Activated naive CD4-positive, alpha-beta T cell treated with anti-CD3 and anti-CD28 coated beads for 36 hours (primary cell): ENCODE measurements at regions of chr14 and their contacts with region 1.

Region 1: DNA sequence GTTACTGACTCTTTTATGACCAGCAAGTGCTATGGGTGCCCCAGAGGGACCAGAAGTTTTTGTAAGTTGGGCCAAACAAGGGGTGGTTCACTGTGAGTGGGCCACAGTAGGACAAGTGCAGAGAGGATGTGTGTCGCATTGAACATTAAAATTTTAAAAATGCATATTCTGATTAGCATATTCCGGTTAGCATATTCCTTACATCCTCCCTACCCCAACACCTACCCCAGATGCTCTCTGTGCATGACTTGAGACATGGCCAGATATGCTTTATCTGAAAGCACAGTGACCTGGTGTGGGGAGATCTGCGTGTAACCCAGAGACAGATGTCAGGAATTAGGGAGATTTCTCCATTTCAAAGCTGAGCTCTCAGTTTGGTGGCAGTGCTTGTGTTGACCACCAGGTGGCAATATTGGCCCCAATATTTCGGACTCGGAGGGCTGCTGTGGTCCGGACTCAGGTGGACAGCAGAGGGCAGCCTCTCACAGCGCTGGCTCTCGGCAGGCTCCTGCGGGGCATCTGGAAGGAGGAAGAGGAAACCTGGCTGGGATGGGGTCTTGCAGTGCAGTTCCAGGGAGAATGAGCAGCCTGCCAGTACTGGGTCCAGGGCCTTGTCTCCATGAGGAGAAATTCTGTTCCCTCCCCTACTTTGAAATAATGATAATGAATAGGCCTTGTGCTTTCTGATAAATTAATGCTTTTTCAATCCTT is 1.6 kb upstream of the CEBPE start:
- DNase-seq: peak; percentile 94
- H3K4me3 Mint-ChIP-seq: no peak overlapping the region
- H3K27ac Mint-ChIP-seq: peak overlapping the region; percentile 87
- H3K4me1 Mint-ChIP-seq: peaks cover 41% of the 10 kb centered on the region
- H3K27me3 Mint-ChIP-seq: no peaks in the 10 kb centered on the region

Region 2: DNA sequence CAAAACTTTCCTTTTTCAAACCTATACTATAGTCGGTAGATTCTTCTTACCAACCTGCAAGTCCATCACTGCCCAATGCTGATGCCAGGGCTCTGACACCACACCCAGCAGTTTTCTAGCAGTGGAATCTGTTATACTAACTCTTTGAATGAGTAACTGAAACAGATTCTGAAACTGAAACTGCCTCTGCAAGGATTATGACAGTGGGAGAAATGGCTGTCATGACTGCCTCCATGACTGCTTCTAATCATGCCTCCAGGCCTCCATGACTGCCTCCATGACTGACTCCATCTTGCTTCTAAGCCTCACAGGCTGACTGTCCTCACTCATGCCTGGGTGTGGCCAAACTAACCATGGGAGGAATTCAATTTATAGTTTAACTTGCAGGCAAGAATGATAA is 383.6 kb before region 1 on chr14:
- CTCF ChIA-PET with region 1: no interaction called
- intact Hi-C with region 1: no loop called
- DNase-seq: peak; percentile 67
- H3K4me3 Mint-ChIP-seq: no peak overlapping the region
- H3K27ac Mint-ChIP-seq: no peak overlapping the region
- H3K4me1 Mint-ChIP-seq: peaks cover 7% of the 10 kb centered on the region
- H3K27me3 Mint-ChIP-seq: peaks cover 2% of the 10 kb centered on the region

Region 3: DNA sequence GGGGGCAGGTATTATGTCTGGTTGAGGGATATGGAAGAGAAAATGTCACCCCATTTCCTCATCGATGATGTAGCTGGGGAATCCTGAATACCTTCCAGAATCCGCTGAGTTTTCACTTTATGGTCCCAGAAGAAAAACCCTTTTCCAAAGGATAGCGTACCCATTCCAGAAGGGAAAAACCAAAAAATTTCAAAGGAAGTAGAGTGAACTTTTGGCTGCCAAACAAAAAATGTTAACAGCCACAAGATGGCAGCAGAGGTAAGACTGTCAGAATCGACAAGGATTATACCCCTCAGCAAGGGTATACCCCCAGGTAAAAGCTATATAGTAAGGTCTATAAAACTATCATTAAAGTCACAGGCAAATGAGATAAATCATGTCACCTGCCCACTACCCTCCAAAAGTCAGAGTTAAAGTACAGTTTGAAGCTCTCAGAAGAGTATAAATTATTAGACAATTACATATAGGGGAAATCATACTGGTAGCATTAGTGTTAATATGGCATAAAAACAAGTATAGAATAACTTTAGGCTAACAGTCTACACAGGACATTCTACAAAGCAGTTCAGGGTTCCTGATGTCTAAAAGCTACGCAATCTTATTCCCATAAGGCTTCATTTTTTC is 43.8 kb before region 1 on chr14:
- CTCF ChIA-PET with region 1: interaction called, 27 read pairs
- intact Hi-C with region 1: no loop called
- DNase-seq: peak; percentile 37
- H3K4me3 Mint-ChIP-seq: no peak overlapping the region
- H3K27ac Mint-ChIP-seq: no peak overlapping the region
- H3K4me1 Mint-ChIP-seq: peaks cover 9% of the 10 kb centered on the region
- H3K27me3 Mint-ChIP-seq: no peaks in the 10 kb centered on the region

Region 4: DNA sequence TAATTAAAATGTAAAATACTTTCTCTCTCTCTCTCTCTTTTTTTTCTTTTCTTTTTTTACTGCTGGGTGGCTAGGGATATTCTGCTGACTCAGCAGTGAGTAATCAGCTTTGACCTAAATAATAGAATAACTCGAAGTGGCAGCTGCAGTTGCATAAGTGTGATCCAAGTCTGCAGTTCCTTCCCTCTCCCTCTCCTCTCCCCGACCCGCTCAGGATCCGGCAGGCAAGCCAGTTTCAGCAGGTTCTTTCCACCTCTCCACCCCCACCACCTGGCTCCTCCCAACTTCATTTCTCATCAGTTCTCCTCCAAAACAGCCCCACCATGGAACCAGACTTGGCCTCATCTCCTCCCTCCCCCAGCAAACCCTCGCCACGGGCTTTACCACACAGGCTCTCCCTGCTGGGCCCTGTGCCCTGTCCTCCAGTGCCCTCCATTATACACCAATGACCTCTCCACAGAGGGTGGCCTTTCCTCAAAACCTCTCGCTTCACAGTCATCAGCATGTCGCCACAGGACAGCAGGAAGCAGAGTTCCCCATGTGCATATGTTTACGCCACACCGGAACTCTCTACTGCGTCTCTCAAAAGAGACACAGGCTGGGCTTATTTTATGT is 40.3 kb after region 1 on chr14:
- CTCF ChIA-PET with region 1: interaction called, 20 read pairs
- intact Hi-C with region 1: no loop called
- DNase-seq: no peak
- H3K4me3 Mint-ChIP-seq: no peak overlapping the region
- H3K27ac Mint-ChIP-seq: no peak overlapping the region
- H3K4me1 Mint-ChIP-seq: peaks cover 20% of the 10 kb centered on the region
- H3K27me3 Mint-ChIP-seq: no peaks in the 10 kb centered on the region

Region 5: GRCh38 chr14:23186913-23187654 is 66.4 kb after region 1 on chr14:
- CTCF ChIA-PET with region 1: interaction called, 298 read pairs
- intact Hi-C with region 1: loop called (anchors 1 kb)
- DNase-seq: peak; percentile 55
- H3K4me3 Mint-ChIP-seq: no peak overlapping the region
- H3K27ac Mint-ChIP-seq: no peak overlapping the region
- H3K4me1 Mint-ChIP-seq: no peaks in the 10 kb centered on the region
- H3K27me3 Mint-ChIP-seq: no peaks in the 10 kb centered on the region

Region 6: GRCh38 chr14:23228812-23229211 is 108.1 kb after region 1 on chr14:
- CTCF ChIA-PET with region 1: no interaction called
- intact Hi-C with region 1: no loop called
- DNase-seq: no peak
- H3K4me3 Mint-ChIP-seq: no peak overlapping the region
- H3K27ac Mint-ChIP-seq: no peak overlapping the region
- H3K4me1 Mint-ChIP-seq: no peaks in the 10 kb centered on the region
- H3K27me3 Mint-ChIP-seq: no peaks in the 10 kb centered on the region

Region 7: DNA sequence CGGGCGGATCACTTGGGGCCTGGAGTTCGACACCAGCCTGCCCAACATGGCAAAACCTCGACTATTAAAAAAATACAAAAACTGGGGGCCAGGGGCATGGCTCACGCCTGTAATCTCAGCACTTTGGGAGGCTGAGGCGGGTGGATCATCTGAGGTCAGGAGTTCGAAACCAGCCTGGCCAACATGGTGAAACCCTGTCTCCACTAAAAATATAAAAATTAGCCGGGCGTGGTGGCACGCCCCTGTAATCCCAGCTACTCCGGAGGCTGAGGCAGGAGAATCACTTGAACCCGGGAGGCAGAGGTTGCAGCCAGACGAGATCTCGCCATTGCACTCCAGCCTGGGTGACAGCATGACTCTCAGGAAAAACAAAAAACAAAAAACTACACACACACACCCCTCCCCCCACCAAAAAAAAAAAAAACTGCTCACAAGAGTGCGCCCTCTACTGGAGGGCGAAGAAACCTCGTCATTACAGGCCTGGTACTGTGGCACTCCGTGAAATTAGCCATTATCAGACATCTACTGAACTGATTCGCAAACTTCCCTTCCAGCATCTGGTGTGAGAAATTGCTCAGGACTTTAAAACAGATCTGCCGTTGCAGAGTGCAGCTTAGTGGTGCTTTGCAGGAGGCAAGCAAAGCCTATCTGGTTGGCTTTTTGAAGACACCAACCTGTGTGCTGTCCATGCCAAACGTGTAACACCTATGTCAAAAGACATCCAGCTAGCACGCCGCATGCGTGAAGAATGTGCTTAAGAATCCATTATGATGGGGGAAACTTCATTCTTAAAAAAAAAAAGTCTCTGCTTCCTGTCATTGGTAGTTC is 174.3 kb after region 1 on chr14:
- CTCF ChIA-PET with region 1: interaction called, 12 read pairs
- intact Hi-C with region 1: loop called (anchors 1 kb)
- DNase-seq: peak; percentile 61
- H3K4me3 Mint-ChIP-seq: no peak overlapping the region
- H3K27ac Mint-ChIP-seq: no peak overlapping the region
- H3K4me1 Mint-ChIP-seq: peaks cover 14% of the 10 kb centered on the region
- H3K27me3 Mint-ChIP-seq: no peaks in the 10 kb centered on the region

Region 8: GRCh38 chr14:23469127-23469905 is 348.6 kb after region 1 on chr14 and contains the start of gene NGDN:
- CTCF ChIA-PET with region 1: no interaction called
- intact Hi-C with region 1: loop called (anchors 10 kb)
- DNase-seq: peak; percentile 96
- H3K4me3 Mint-ChIP-seq: no peak within 1 kb of the TSS
- H3K27ac Mint-ChIP-seq: no peak within 1 kb of the TSS
- H3K4me1 Mint-ChIP-seq: peaks cover 11% of the 10 kb centered on the region
- H3K27me3 Mint-ChIP-seq: no peaks in the 10 kb centered on the region
- total RNA-seq, gene NGDN: 38.9 to 40.8 TPM